AG04449 (cell line): ENCODE measurements at regions of chr17 and their contacts with region 1.

Region 1: DNA sequence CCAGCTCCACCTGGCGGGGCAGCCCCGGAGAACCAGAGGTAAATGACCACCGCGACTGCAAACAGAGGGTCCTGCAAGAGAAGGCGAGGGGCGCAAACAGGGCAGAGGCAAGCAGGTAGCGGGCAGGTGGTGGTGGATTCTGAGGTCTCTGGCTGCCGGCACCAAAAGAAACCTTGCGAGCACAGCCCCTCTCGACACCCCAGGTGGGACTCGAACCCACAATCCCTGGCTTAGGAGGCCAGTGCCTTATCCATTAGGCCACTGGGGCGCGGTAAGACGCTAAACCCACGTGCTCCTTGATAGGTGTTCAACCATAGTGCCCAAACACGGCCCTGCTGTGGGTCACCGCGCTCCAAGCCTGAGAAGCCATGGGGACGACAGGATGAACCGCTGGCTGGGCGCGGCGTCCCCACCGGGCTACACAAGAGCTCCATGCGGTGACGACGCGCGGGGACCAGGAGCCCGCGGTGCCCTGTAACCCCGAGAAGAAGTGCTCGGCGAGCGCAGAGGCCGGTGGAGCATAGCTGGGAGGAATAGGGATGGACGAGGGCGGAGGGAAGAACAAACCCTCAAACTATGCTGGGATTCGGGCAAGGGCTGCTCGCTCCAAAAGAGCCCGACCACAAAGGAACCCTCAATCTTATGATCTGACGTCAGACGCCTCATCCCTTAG is 12.4 kb downstream of the ATP5PD start:
- DNase-seq: no peak
- H3K4me3 ChIP-seq: peak overlapping the region; percentile 95
- CTCF ChIP-seq: peak; percentile 2

Region 2: GRCh38 chr17:74654742-74655141 is 379.6 kb before region 1 on chr17:
- CTCF ChIA-PET with region 1: no interaction called
- POLR2A ChIA-PET with region 1: no interaction called
- DNase-seq: no peak
- H3K4me3 ChIP-seq: no peak overlapping the region
- CTCF ChIP-seq: no peak

Region 3: DNA sequence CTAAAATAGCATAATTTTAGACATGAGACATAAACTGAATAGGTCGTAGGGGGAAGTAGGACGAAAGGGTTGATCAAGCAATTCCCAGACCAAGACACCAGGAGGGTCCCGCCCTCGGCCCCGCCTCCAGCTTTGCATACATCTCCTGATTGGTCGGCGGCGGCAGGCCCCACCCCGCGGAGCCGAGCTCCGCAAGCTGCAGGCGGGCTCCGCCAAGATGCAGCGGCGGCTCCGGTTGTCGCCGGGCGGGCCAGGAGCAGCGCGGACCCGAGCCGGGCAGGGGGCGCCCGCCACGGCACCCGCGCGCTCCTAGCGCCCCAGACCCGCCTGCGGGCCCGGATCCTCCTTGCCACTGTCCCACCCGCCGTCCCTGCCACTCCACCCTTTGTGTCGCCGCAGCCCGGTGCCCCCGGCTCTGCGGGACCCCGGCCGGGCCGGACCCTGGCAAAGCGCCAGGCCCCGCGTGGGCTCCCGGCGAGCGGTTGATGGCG is 46.9 kb before region 1 on chr17 and contains the start of gene CDR2L:
- CTCF ChIA-PET with region 1: interaction called, 8 read pairs
- POLR2A ChIA-PET with region 1: interaction called, 12 read pairs
- DNase-seq: peak; percentile 67
- H3K4me3 ChIP-seq: peak within 1 kb of the TSS; percentile 74
- CTCF ChIP-seq: no peak

Region 4: GRCh38 chr17:75046582-75047289 is 12.4 kb after region 1 on chr17 and contains the starts of genes ATP5PD and KCTD2:
- CTCF ChIA-PET with region 1: interaction called, 3 read pairs
- POLR2A ChIA-PET with region 1: interaction called, 18 read pairs
- DNase-seq: peak; percentile 77
- H3K4me3 ChIP-seq: peak within 1 kb of the TSS; percentile 99
- CTCF ChIP-seq: no peak